ENCODE measurements at regions of chr2 and their contacts with region 1.

Region 1: DNA sequence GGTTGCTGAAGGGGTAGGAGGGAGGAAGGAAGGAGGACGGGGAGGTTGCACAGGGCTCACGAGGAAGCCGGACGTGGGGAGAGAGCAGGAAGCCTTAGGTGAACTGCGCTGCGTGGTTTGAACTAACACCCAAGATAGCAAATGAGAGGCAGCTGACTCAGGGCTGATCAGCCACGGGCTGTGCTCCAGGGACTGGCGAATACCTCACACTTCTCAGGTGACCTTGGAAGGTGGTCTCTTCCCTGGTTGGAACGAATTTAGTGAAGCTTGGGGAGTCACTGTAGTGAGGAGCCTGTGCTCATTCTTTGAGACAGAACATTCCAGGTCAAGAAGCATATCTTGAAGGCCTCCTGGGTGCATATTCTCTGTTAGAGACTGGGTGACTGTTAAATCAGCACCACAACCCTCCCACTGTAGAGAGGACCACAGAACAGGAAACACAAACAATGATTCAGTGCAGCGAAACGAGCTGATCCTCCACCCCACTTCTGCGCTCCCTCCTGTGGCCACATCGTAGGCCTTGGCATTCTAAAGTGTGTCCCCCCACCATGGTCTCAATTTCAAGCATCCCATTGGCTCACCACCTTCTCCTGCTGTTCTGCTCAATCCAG is 33.8 kb downstream of the TOGARAM2 start:
- DNase-seq: peak; percentile 75 to 91 (median 87)
- H3K4me3 ChIP-seq: peak overlapping the region in 2 of 7 experiments; percentile 14 to 32
- H3K27ac ChIP-seq: no peak overlapping the region
- H3K4me1 ChIP-seq: peaks cover 17 to 70% (median 65%) of the 10 kb centered on the region in 4 experiments
- H3K27me3 ChIP-seq: no peaks in the 10 kb centered on the region

Region 2: GRCh38 chr2:28958689-28959088 is 56.2 kb before region 1 on chr2:
- CTCF ChIA-PET with region 1: interaction called, 22 read pairs
- POLR2A ChIA-PET with region 1: no interaction called
- DNase-seq: peak; percentile 69 to 77 (median 69)
- H3K4me3 ChIP-seq: no peak overlapping the region
- H3K27ac ChIP-seq: no peak overlapping the region
- H3K4me1 ChIP-seq: peaks cover 8 to 29% (median 15%) of the 10 kb centered on the region in 4 experiments
- H3K27me3 ChIP-seq: no peaks in the 10 kb centered on the region

Region 3: GRCh38 chr2:29000481-29000880 is 14.4 kb before region 1 on chr2:
- CTCF ChIA-PET with region 1: interaction called, 38 read pairs
- POLR2A ChIA-PET with region 1: interaction called, 4 read pairs
- DNase-seq: peak; percentile 94 to 98 (median 96)
- H3K4me3 ChIP-seq: peak overlapping the region in 1 of 7 experiments; percentile 35
- H3K27ac ChIP-seq: no peak overlapping the region
- H3K4me1 ChIP-seq: peaks cover 3 to 22% (median 21%) of the 10 kb centered on the region in 4 experiments
- H3K27me3 ChIP-seq: no peaks in the 10 kb centered on the region

Region 4: GRCh38 chr2:29024882-29025430 is 10.0 kb after region 1 on chr2:
- CTCF ChIA-PET with region 1: interaction called, 23 read pairs
- POLR2A ChIA-PET with region 1: no interaction called
- DNase-seq: no peak
- H3K4me3 ChIP-seq: no peak overlapping the region
- H3K27ac ChIP-seq: no peak overlapping the region
- H3K4me1 ChIP-seq: peaks cover 0 to 6% (median 3%) of the 10 kb centered on the region in 4 experiments
- H3K27me3 ChIP-seq: no peaks in the 10 kb centered on the region

Region 5: DNA sequence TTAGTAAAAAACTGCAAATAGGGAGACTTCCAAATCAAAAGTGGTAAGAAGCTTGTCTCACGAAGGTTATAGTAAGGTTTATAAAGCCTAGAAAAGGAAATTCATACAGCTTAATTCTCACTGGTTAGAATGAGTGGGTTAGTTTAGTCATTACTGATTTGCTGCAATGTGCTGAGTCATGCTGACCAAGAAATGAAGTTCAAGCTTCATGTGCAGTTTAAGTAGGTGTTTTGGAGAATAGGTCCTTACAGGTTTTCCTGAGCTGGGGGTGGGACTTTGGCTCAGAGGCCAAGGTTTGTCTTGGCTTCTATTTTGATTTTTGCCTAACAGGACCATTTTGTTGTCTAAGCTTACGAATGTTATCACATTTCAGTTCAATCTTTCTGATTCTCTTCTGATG is 115.4 kb after region 1 on chr2:
- CTCF ChIA-PET with region 1: no interaction called
- POLR2A ChIA-PET with region 1: no interaction called
- DNase-seq: peak; percentile 67 to 89 (median 85)
- H3K4me3 ChIP-seq: peak overlapping the region in 1 of 7 experiments; percentile 34
- H3K27ac ChIP-seq: peak overlapping the region in 1 of 2 experiments; percentile 45
- H3K4me1 ChIP-seq: peaks cover 0 to 14% (median 11%) of the 10 kb centered on the region in 4 experiments
- H3K27me3 ChIP-seq: no peaks in the 10 kb centered on the region

Measured in common myeloid progenitor, CD34-positive (primary cell).